Activated naive CD4-positive, alpha-beta T cell treated with anti-CD3 and anti-CD28 coated beads for 36 hours (primary cell): ENCODE measurements at regions of chr19 and their contacts with region 1.

Region 1: GRCh38 chr19:38095411-38096308 is 128.4 kb downstream of the DPF1 start:
- DNase-seq: peak; percentile 77
- H3K4me3 Mint-ChIP-seq: no peak overlapping the region
- H3K27ac Mint-ChIP-seq: no peak overlapping the region
- H3K4me1 Mint-ChIP-seq: no peaks in the 10 kb centered on the region
- H3K27me3 Mint-ChIP-seq: no peaks in the 10 kb centered on the region

Region 2: GRCh38 chr19:38142176-38143035 is 46.7 kb after region 1 on chr19:
- CTCF ChIA-PET with region 1: no interaction called
- intact Hi-C with region 1: loop called (anchors 5 kb)
- DNase-seq: peak; percentile 67
- H3K4me3 Mint-ChIP-seq: no peak overlapping the region
- H3K27ac Mint-ChIP-seq: no peak overlapping the region
- H3K4me1 Mint-ChIP-seq: no peaks in the 10 kb centered on the region
- H3K27me3 Mint-ChIP-seq: no peaks in the 10 kb centered on the region